PC-3 (cell line): ENCODE measurements at regions of chr4 and their contacts with region 1.

Region 1: DNA sequence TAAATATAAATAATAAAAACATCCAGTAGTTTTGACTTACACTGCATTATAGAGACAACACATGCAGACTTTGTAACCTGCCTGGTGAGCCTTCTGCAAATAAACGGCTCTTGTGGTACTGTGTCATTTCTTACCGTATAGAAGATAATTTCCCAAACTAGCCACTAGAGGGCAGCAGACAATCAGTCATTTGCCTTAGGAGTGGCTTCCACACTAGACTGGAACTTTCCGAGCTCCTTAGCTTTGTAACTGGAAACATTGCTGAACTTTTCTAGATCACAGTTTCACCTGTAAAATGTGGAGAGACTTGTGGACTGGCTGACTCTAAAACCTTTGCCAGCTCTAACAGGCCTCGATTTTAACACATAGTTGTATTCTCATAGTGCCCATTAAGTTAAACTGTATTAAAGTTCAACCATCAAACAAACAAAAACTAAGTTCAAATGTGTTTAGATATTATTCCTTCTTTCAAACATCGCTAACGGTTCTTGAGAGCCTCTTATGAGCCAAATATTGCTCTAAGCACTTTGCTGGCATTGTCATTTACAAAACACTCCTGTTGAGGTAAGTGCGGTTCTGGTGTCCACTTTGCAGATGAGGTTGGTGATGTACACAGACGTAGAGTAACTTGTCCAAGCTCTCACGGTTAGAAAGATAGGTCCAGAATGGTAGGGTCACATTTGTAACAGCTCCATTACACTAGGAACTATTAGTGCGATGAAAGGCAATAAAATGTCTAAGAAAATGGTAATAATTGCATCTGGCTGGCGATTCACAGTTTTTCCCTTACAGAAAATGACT is 345.5 kb downstream of the ANK2 start:
- DNase-seq: peak; percentile 92
- ATAC-seq: peak; percentile 89
- H3K4me3 ChIP-seq: no peak overlapping the region; the same call in 1 of the 2 replicates
- H3K27ac ChIP-seq: peak overlapping the region; percentile 49
- H3K4me1 ChIP-seq: peaks cover 15% of the 10 kb centered on the region
- H3K27me3 ChIP-seq: no peaks in the 10 kb centered on the region
- CTCF ChIP-seq: peak; percentile 82

Region 2: DNA sequence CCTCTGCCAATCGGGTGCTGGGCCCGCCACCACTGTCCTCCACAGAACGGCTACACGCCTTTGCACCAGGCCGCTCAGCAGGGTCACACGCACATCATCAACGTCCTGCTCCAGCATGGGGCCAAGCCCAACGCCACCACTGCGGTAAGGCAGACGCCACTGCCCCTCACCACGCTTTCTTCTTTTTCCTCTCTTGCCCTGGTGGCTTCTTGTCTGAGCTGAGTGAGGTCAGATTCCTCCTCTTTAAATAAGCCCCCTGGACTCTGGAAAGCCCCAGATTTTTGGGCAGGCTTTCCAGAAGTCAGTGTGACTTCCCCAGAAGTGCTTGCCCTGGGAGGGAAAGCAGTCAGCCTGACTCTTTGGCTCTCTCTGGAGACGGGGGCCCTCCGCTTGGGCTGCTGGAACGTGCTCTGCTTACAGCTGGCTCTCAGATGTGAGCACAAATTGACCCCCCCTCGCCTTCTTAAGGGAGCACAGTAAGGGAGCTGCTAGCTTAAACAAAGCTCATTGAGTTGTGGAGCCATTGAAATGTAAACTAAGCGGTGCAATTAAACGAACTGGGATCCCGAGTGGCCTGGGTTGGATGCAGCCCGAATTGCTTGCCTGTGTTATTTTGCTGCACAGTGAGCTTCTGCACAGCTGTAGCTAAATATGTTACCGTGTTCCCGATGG is 102.4 kb before region 1 on chr4:
- CTCF ChIA-PET with region 1: no interaction called
- POLR2A ChIA-PET with region 1: no interaction called
- intact Hi-C with region 1: loop called (anchors 1 kb)
- DNase-seq: no peak
- ATAC-seq: no peak
- H3K4me3 ChIP-seq: no peak overlapping the region
- H3K27ac ChIP-seq: no peak overlapping the region
- H3K4me1 ChIP-seq: no peaks in the 10 kb centered on the region
- H3K27me3 ChIP-seq: no peaks in the 10 kb centered on the region
- CTCF ChIP-seq: no peak

Region 3: GRCh38 chr4:113468165-113469022 is 73.5 kb after region 1 on chr4:
- CTCF ChIA-PET with region 1: interaction called, 5 read pairs
- POLR2A ChIA-PET with region 1: no interaction called
- intact Hi-C with region 1: loop called (anchors 2 kb)
- DNase-seq: peak; percentile 93
- ATAC-seq: peak; percentile 96
- H3K4me3 ChIP-seq: peak overlapping the region; percentile 46; the same call in 1 of the 2 replicates
- H3K27ac ChIP-seq: peak overlapping the region; percentile 87
- H3K4me1 ChIP-seq: peaks cover 26% of the 10 kb centered on the region
- H3K27me3 ChIP-seq: no peaks in the 10 kb centered on the region
- CTCF ChIP-seq: no peak

Region 4: GRCh38 chr4:113636438-113636818 is 241.5 kb after region 1 on chr4:
- CTCF ChIA-PET with region 1: no interaction called
- POLR2A ChIA-PET with region 1: no interaction called
- intact Hi-C with region 1: loop called (anchors 2 kb)
- DNase-seq: peak; percentile 29
- ATAC-seq: peak; percentile 42
- H3K4me3 ChIP-seq: no peak overlapping the region
- H3K27ac ChIP-seq: no peak overlapping the region
- H3K4me1 ChIP-seq: peaks cover 47% of the 10 kb centered on the region
- H3K27me3 ChIP-seq: no peaks in the 10 kb centered on the region
- CTCF ChIP-seq: peak; percentile 36

Region 5: GRCh38 chr4:114386637-114387233 is 991.8 kb after region 1 on chr4:
- CTCF ChIA-PET with region 1: no interaction called
- POLR2A ChIA-PET with region 1: no interaction called
- intact Hi-C with region 1: loop called (anchors 2 kb)
- DNase-seq: peak; percentile 55
- ATAC-seq: peak; percentile 42
- H3K4me3 ChIP-seq: no peak overlapping the region
- H3K27ac ChIP-seq: no peak overlapping the region
- H3K4me1 ChIP-seq: peaks cover 13% of the 10 kb centered on the region
- H3K27me3 ChIP-seq: no peaks in the 10 kb centered on the region
- CTCF ChIP-seq: peak; percentile 71